Uterus (tissue), 4 donors: ENCODE measurements at regions of chr4 and their contacts with region 1.

Region 1: DNA sequence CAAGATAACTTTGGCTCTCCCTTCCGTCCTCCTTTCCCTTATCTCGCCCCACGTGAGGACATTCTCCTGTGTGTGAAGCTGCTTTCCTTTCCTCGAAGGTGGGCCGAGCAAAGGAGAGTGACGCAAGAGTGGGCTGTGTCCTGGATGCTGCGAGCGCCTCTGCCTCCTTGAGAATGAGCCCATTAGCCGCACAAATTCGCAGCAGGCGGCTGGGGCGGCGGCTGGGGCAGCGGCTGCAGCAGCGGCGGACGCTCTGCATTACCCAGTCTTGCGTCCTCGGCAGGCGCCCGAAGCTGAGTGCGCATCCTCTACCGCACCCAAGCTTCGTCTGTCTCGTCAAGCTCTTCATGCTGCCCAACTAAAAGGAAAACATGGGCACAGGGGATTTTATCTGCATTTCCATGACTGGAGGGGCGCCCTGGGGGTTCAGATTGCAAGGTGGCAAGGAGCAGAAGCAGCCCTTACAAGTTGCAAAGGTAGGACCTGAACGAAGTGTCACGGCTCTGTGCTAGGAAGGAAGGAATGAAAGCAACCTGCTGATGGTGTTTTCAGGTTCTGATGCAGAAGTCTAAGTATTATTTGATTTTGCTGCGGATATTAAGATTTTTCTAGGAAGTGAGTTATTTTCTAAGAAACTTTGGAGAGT is at the start of gene SYNPO2:
- DNase-seq: peak; percentile 90 to 95
- H3K4me3 ChIP-seq: peak within 1 kb of the TSS; percentile 65 to 75
- H3K27ac ChIP-seq: peak within 1 kb of the TSS; percentile 89 to 96
- H3K4me1 ChIP-seq: no peaks in the 10 kb centered on the region
- H3K27me3 ChIP-seq: no peaks in the 10 kb centered on the region
- CTCF ChIP-seq: peak in 2 of 4 experiments; percentile 5 to 33
- POLR2A ChIP-seq: peak; percentile 74 to 94
- total RNA-seq, gene SYNPO2: 144 to 400 (median 228) TPM

Region 2: DNA sequence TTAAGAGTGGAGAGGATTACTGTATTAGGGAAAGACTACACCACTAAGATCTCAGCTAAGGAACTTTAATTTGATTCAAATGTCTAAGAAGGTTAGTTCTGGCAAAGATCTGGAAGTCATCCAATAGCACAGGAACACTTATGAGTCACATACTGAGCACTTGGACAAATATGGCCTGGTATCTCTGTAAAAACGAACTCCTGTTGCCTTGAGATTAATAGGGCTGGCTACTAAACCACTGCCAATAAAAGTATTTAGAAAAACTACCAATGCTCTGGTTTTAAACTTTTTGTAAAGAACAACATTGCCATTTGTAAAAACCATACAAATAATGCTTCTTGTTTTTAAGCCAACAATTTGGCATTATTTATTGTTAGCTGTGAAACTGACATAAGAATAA is 123.4 kb before region 1 on chr4:
- intact Hi-C with region 1: loop called (anchors 10 kb)
- DNase-seq: peak in 1 of 2 donors; percentile 52
- H3K4me3 ChIP-seq: no peak overlapping the region
- H3K27ac ChIP-seq: peak overlapping the region; percentile 86 to 97
- H3K4me1 ChIP-seq: peaks cover 0 to 36% of the 10 kb centered on the region in 2 donors
- H3K27me3 ChIP-seq: no peaks in the 10 kb centered on the region
- CTCF ChIP-seq: no peak
- POLR2A ChIP-seq: no peak

Region 3: GRCh38 chr4:118968005-118968404 is 79.2 kb after region 1 on chr4:
- intact Hi-C with region 1: loop called (anchors 5 kb)
- DNase-seq: peak; percentile 50 to 68
- H3K4me3 ChIP-seq: no peak overlapping the region
- H3K27ac ChIP-seq: peak overlapping the region; percentile 84 to 88
- H3K4me1 ChIP-seq: peaks cover 7 to 14% of the 10 kb centered on the region in 2 donors
- H3K27me3 ChIP-seq: no peaks in the 10 kb centered on the region
- CTCF ChIP-seq: no peak
- POLR2A ChIP-seq: no peak